Panc1 (cell line): ENCODE measurements at regions of chr14 and their contacts with region 1.

Region 1: GRCh38 chr14:54493293-54493692 is 4.5 kb upstream of the GMFB start:
- DNase-seq: no peak
- ATAC-seq: no peak
- H3K4me3 ChIP-seq: no peak overlapping the region
- H3K27ac ChIP-seq: no peak overlapping the region
- H3K4me1 ChIP-seq: peaks cover 6% of the 10 kb centered on the region; the same call in 1 of the 2 replicates
- H3K27me3 ChIP-seq: no peaks in the 10 kb centered on the region
- CTCF ChIP-seq: peak; percentile 35

Region 2: DNA sequence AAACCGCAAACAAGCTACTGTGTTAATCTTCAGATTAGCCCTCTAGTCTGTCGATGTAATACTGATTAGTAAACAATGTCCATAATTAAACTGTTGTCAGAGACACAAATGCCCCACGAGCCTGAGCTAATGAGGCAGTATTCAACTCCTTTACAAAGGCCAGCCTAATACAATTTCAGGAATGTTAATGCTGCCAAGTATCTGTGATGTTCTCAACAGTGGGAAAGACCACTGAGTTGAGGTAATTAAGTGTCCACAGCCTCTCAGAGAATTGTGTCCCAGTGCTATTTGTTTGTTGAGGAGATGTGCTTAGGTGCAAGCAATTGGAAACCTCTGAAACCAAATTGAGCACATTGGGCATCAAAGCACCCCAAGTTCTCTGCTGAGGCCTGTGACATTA is 235.9 kb before region 1 on chr14:
- CTCF ChIA-PET with region 1: interaction called, 11 read pairs
- POLR2A ChIA-PET with region 1: no interaction called
- in situ Hi-C with region 1: no loop called
- intact Hi-C with region 1: no loop called
- DNase-seq: no peak
- ATAC-seq: no peak
- H3K4me3 ChIP-seq: no peak overlapping the region
- H3K27ac ChIP-seq: no peak overlapping the region
- H3K4me1 ChIP-seq: no peaks in the 10 kb centered on the region
- H3K27me3 ChIP-seq: no peaks in the 10 kb centered on the region
- CTCF ChIP-seq: no peak

Region 3: DNA sequence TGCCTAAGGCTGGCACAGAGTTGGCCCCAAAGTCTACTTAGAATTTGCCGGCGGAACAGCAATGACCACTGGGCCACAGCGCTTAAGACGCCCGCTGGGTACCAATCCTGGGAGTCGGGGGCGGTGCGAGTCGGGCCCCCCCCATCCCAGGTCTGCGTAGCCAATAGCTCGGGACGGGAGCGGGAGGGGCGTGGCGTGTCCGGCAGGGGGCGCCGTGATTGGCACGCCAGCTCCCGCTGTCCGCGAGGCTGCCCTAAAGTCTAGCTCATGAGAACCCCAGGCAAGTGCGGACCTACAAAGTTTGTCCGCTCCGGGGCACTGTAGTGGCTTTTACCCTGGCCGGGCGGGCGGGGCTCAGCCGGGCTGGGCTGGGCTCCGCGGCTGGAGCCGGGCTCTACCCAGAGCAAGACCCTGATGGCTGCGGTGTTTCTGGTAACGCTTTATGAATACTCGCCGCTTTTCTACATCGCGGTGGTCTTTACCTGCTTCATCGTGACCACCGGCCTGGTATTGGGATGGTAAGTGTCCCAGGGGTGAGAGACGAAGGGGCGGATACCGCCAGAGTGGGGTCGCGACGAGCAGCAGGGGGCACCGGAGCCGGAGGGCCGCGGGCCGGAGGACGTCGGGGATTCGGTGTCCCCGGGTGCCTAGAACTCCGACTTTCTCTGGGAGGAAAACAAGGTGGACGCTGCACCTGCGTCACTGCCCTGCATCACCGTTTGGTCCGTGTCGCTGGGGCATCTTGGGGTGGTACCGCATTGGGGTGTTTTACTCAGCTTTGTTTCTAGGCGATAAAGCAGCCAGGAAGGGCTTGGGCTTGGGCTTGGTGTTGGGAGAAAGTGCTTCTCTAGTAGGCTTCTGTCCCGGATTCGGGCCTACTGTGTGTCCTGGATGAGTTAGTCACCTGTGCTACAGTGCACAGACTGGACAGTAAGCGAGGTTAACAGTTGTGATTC is 16.5 kb after region 1 on chr14 and contains the start of gene CGRRF1:
- CTCF ChIA-PET with region 1: interaction called, 3 read pairs
- POLR2A ChIA-PET with region 1: interaction called, 10 read pairs
- in situ Hi-C with region 1: no loop called
- intact Hi-C with region 1: no loop called
- DNase-seq: peak; percentile 72
- ATAC-seq: peak; percentile 100
- H3K4me3 ChIP-seq: peak within 1 kb of the TSS; percentile 90 to 97
- H3K27ac ChIP-seq: peak within 1 kb of the TSS; percentile 84
- H3K4me1 ChIP-seq: peaks cover 6% of the 10 kb centered on the region
- H3K27me3 ChIP-seq: no peaks in the 10 kb centered on the region
- CTCF ChIP-seq: peak; percentile 35
- total RNA-seq, gene CGRRF1: 14.1 TPM